ENCODE measurements at regions of chr4 and their contacts with region 1.

Region 1: GRCh38 chr4:106444557-106444956 is 76.0 kb upstream of the GIMD1 start:
- DNase-seq: peak; percentile 40 to 43
- H3K4me3 ChIP-seq: no peak overlapping the region
- H3K4me3 Mint-ChIP-seq: no peak overlapping the region
- H3K27ac Mint-ChIP-seq: peak overlapping the region; percentile 9
- H3K4me1 ChIP-seq: no peaks in the 10 kb centered on the region; the same call in 1 of the 2 replicates
- H3K4me1 Mint-ChIP-seq: peaks cover 9% of the 10 kb centered on the region
- H3K27me3 ChIP-seq: no peaks in the 10 kb centered on the region
- H3K27me3 Mint-ChIP-seq: no peaks in the 10 kb centered on the region
- CTCF ChIP-seq: no peak

Region 2: GRCh38 chr4:106409893-106410889 is 34.4 kb before region 1 on chr4:
- CTCF ChIA-PET with region 1: no interaction called
- POLR2A ChIA-PET with region 1: no interaction called
- intact Hi-C with region 1: loop called (anchors 2 kb)
- DNase-seq: no peak
- H3K4me3 ChIP-seq: no peak overlapping the region
- H3K4me3 Mint-ChIP-seq: no peak overlapping the region
- H3K27ac Mint-ChIP-seq: peak overlapping the region; percentile 54
- H3K4me1 ChIP-seq: peaks cover 57% of the 10 kb centered on the region
- H3K4me1 Mint-ChIP-seq: peaks cover 32% of the 10 kb centered on the region
- H3K27me3 ChIP-seq: no peaks in the 10 kb centered on the region
- H3K27me3 Mint-ChIP-seq: no peaks in the 10 kb centered on the region
- CTCF ChIP-seq: no peak

Region 3: DNA sequence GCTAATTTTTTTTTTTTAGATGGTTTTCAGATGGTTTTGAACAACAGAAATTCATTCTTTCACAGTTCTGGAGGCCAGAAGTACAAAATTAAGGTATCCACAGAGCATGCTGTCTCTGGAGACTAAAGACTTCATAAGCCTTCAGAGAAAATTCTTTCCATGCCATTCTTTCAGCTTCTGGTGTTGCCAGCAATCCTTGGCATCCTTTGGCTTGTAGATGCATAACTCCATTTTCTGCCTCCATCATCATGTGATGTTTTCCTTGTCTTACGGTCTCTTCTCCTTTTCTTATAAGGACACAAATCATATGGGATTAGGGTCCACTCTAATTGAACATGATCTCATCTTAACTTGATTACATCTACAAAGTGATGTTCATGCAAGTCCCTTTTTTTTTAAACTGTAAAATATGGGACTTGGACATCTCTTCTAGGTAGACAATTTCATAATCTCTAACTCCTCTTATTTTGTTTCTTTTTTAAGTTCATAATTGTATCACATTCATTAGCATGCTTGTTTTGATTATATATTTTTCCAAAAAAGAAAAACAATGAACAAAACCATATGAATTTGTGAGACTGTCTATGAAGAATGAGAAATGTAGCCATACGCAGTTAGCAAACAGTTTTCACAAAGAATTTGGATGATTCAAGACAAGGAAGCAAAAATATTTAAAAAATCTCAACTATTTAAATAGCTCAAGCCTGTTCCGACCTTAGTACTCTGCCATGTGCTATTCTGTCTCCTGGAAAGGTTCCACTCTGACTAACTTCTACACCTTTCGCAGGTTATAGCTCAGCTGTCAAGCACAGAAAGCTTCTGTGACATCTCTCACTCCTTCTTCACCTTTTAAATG is 22.9 kb before region 1 on chr4:
- CTCF ChIA-PET with region 1: no interaction called
- POLR2A ChIA-PET with region 1: no interaction called
- intact Hi-C with region 1: loop called (anchors 2 kb)
- DNase-seq: peak; percentile 40 to 51
- H3K4me3 ChIP-seq: no peak overlapping the region
- H3K4me3 Mint-ChIP-seq: peak overlapping the region; percentile 34
- H3K27ac Mint-ChIP-seq: peak overlapping the region; percentile 94
- H3K4me1 ChIP-seq: peaks cover 55% of the 10 kb centered on the region
- H3K4me1 Mint-ChIP-seq: peaks cover 41% of the 10 kb centered on the region
- H3K27me3 ChIP-seq: no peaks in the 10 kb centered on the region
- H3K27me3 Mint-ChIP-seq: no peaks in the 10 kb centered on the region
- CTCF ChIP-seq: no peak

Measured in Caco-2 (cell line).